Caco-2 (cell line): ENCODE measurements at regions of chr15 and their contacts with region 1.

Region 1: GRCh38 chr15:70140543-70141375 is 43.0 kb upstream of the TLE3 start:
- DNase-seq: peak; percentile 91 to 95
- H3K4me3 ChIP-seq: no peak overlapping the region
- H3K4me3 Mint-ChIP-seq: peak overlapping the region; percentile 63
- H3K27ac Mint-ChIP-seq: peak overlapping the region; percentile 94
- H3K4me1 ChIP-seq: peaks cover 45% of the 10 kb centered on the region
- H3K4me1 Mint-ChIP-seq: peaks cover 45% of the 10 kb centered on the region
- H3K27me3 ChIP-seq: no peaks in the 10 kb centered on the region
- H3K27me3 Mint-ChIP-seq: no peaks in the 10 kb centered on the region
- CTCF ChIP-seq: no peak

Region 2: DNA sequence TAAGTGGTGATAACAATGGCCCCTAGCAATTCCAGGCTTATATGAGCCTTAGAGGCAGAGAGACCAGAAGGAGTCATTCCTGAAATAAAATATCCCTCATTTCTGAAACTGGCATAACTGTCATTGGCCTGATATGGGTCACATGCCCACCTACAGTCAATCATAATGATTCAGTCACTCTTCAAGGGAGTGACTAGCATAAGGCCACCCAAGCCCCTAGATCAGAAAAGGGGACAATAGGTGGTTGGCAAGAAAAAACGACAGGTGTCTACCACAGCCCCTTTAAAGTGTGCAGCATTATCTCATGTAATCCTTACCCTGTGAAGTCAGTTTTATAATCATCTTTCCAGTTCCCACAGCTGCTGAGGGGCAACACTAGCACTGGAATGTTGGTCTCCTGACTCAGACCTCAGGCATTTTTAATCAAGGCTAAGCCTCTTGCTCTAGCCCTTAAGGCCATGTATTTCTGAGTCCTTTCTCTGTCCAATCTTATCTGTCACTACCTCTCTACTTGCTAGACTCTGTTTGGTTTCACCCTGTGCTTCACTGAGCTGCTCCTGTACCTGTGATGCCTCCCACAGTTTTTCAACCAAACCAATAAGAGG is 214.8 kb before region 1 on chr15:
- CTCF ChIA-PET with region 1: no interaction called
- POLR2A ChIA-PET with region 1: no interaction called
- intact Hi-C with region 1: no loop called
- DNase-seq: no peak
- H3K4me3 ChIP-seq: no peak overlapping the region
- H3K4me3 Mint-ChIP-seq: no peak overlapping the region
- H3K27ac Mint-ChIP-seq: no peak overlapping the region
- H3K4me1 ChIP-seq: no peaks in the 10 kb centered on the region
- H3K4me1 Mint-ChIP-seq: no peaks in the 10 kb centered on the region
- H3K27me3 ChIP-seq: no peaks in the 10 kb centered on the region
- H3K27me3 Mint-ChIP-seq: no peaks in the 10 kb centered on the region
- CTCF ChIP-seq: no peak

Region 3: DNA sequence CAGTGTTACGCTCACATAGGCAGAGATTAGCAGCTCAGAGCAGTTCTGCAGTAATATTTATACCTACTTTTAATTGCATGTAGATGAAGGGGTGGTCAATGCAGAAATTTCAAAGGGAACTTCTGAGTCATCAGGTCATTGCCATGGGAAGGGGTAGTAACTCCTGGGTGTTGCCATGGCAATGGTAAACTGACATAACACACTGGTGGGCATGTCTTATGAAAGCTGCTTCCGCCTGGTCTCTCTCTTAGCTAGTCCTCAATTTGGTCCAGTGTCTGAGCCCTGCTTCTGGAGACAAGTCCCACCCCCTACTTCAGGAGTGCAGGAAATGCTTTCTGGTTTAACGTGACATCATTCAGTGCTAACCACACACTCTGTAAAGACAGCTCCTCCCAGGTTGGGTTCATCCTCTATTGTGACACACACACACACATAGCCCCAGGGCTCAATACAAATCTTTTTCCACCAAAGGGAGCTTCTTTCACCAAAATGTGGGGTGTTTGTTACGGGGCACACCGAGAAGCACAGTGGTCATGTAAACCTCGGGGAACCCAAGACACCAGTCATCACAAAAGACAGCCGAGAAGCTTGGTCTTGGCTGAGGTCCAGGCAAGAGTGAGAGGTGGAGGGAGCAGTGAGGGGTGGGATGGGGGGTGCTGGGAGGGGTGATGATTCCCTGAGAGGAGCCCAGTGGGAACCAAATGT is 117.5 kb before region 1 on chr15:
- CTCF ChIA-PET with region 1: no interaction called
- POLR2A ChIA-PET with region 1: no interaction called
- intact Hi-C with region 1: no loop called
- DNase-seq: no peak
- H3K4me3 ChIP-seq: no peak overlapping the region
- H3K4me3 Mint-ChIP-seq: no peak overlapping the region
- H3K27ac Mint-ChIP-seq: no peak overlapping the region
- H3K4me1 ChIP-seq: no peaks in the 10 kb centered on the region
- H3K4me1 Mint-ChIP-seq: no peaks in the 10 kb centered on the region
- H3K27me3 ChIP-seq: no peaks in the 10 kb centered on the region
- H3K27me3 Mint-ChIP-seq: no peaks in the 10 kb centered on the region
- CTCF ChIP-seq: no peak

Region 4: GRCh38 chr15:70111203-70112073 is 29.3 kb before region 1 on chr15:
- CTCF ChIA-PET with region 1: interaction called, 7 read pairs
- POLR2A ChIA-PET with region 1: no interaction called
- intact Hi-C with region 1: loop called (anchors 1 kb)
- DNase-seq: peak; percentile 87
- H3K4me3 ChIP-seq: peak overlapping the region; percentile 11
- H3K4me3 Mint-ChIP-seq: peak overlapping the region; percentile 64
- H3K27ac Mint-ChIP-seq: peak overlapping the region; percentile 56
- H3K4me1 ChIP-seq: peaks cover 12% of the 10 kb centered on the region
- H3K4me1 Mint-ChIP-seq: peaks cover 15% of the 10 kb centered on the region
- H3K27me3 ChIP-seq: no peaks in the 10 kb centered on the region
- H3K27me3 Mint-ChIP-seq: no peaks in the 10 kb centered on the region
- CTCF ChIP-seq: no peak

Region 5: GRCh38 chr15:70153981-70154717 is 13.4 kb after region 1 on chr15:
- CTCF ChIA-PET with region 1: interaction called, 15 read pairs
- POLR2A ChIA-PET with region 1: interaction called, 5 read pairs
- intact Hi-C with region 1: loop called (anchors 1 kb)
- DNase-seq: peak; percentile 64 to 85
- H3K4me3 ChIP-seq: no peak overlapping the region
- H3K4me3 Mint-ChIP-seq: peak overlapping the region; percentile 35
- H3K27ac Mint-ChIP-seq: peak overlapping the region; percentile 24
- H3K4me1 ChIP-seq: peaks cover 19% of the 10 kb centered on the region
- H3K4me1 Mint-ChIP-seq: peaks cover 46% of the 10 kb centered on the region
- H3K27me3 ChIP-seq: no peaks in the 10 kb centered on the region
- H3K27me3 Mint-ChIP-seq: no peaks in the 10 kb centered on the region
- CTCF ChIP-seq: no peak